ENCODE measurements at regions of chr18 and their contacts with region 1.

Region 1: DNA sequence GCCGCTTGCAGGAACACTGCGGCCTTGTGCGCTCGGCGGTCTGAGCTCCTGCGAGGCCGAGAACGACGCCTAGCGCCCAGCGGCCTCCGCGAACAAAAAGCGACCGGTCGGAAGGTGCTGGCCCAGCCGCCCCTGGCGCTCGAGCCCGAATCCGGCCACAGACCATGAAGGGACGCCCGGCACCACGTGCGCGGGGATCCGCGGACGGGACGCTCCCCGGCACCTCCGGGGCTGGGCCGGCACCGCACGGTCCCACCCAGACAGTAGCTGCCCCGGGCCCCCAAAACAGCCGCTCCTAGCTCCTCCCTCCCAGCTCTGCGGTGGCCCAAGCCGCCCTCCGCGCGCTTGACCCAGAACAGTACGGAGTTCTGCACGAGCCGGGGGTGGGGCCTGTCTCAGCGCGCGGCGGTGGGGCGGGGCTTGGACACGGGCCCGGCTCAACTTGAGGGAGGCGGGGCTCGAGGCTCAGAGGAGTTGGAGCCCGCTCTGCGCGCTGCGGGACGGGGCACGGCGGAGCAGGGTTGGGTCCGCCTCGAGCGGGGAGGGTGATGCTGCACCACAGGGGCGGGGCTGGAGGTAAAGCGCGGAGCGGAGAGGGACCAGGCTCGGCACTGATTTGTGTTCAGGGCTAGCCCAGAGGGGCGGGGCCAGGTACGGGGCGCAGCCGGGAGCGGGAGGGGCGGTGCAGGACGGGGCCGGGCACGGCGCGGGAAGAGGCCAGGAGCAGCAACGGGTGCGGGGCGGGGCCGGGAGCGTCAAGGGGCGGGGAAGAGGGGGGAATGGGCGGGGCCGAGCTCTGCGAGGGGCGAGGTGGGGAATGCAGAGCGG is 538 bp upstream of the IMPA2 start:
- DNase-seq: peak; percentile 96
- ATAC-seq: peak; percentile 91
- H3K4me3 Mint-ChIP-seq: peak overlapping the region; percentile 85
- H3K27ac Mint-ChIP-seq: peak overlapping the region; percentile 46
- H3K4me1 Mint-ChIP-seq: peaks cover 18% of the 10 kb centered on the region
- H3K27me3 Mint-ChIP-seq: no peaks in the 10 kb centered on the region
- CTCF ChIP-seq: no peak

Region 2: GRCh38 chr18:11883153-11883552 is 97.6 kb before region 1 on chr18:
- CTCF ChIA-PET with region 1: no interaction called
- POLR2A ChIA-PET with region 1: interaction called, 5 read pairs
- intact Hi-C with region 1: loop called (anchors 1 kb)
- DNase-seq: no peak
- ATAC-seq: peak; percentile 95
- H3K4me3 Mint-ChIP-seq: peak overlapping the region; percentile 6
- H3K27ac Mint-ChIP-seq: peak overlapping the region; percentile 74
- H3K4me1 Mint-ChIP-seq: peaks cover 48% of the 10 kb centered on the region
- H3K27me3 Mint-ChIP-seq: no peaks in the 10 kb centered on the region
- CTCF ChIP-seq: no peak

Region 3: DNA sequence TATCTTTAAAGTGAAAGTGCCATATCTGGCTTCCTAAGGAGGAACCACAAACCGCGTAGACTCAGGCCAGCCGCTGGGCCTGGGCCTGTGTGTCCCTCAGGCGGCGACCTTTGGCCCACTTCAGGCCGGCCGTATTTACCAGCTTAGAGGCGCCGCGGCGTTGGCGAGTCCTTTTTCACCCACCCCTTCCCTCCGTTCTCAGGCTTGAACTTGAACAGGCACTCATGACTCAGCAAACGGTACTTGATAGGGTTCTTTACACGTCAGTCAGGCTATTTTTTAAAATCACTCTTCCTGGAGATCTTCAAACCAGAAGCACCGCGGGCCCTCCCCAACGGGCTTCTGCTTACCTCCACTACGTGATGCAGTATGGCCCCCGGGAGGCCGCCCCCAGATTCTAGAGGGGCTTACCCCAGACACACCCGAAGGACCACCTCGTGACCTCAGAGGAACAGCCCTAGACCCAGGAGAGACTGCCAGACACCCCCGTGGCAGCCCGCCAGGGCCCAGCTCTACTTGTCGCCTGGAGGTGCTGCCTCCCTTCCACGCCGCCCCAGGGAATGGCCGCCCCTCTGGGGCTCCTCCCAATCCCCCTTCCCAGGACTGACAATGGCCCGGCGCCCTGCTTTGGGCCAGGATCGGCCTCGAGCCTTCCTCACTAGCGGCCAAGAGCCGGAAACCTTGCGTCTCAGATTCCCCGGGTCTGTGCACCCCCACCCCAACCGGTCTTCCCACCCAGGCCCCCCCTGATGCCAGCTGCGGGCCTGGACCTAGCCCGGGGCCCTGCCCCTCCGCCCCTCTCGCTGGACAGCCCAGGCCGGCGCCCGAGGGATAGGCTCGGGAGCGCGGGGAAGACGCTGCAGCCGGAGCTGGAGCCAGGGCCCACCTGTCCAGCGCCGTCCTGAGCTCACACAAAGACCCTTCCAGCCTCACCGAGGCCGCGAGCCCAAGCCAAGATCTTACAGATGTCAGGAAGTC is 33.3 kb before region 1 on chr18:
- CTCF ChIA-PET with region 1: no interaction called
- POLR2A ChIA-PET with region 1: interaction called, 18 read pairs
- intact Hi-C with region 1: loop called (anchors 1 kb)
- DNase-seq: peak; percentile 49
- ATAC-seq: peak; percentile 81
- H3K4me3 Mint-ChIP-seq: peak overlapping the region; percentile 84
- H3K27ac Mint-ChIP-seq: peak overlapping the region; percentile 70
- H3K4me1 Mint-ChIP-seq: peaks cover 13% of the 10 kb centered on the region
- H3K27me3 Mint-ChIP-seq: no peaks in the 10 kb centered on the region
- CTCF ChIP-seq: no peak

Region 4: DNA sequence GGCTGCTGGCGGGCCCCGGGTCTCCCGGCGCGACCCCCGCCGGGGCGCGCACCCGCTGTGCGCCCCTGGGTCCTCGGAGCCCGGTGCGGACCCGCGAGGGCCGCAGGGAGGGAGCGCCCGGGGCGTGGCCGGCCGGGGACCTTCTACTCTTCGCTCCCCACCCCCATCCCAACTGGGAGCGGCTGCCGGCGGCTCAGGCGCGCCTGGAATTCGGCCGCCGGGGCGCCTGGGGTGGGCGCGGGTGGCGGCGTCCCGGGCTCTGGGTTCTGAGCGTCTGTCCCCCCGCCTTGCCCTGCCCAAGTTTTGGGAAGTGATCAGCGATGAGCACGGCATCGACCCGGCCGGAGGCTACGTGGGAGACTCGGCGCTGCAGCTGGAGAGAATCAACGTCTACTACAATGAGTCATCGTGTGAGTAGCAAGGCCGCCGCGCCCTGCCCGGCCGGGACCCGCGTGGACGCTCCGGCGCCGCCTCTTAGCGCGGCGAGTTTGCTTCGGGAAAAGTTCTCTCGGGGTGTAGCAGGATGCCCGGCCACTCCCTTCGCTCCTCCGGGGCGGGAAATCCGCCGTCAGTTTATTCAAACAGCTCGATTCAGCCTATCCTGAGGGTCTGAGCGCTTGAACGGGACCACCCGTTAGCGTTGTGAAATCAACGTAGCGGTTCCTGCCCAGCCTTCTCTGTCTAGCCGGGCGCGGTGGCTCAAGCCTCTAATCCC is 327.8 kb after region 1 on chr18:
- CTCF ChIA-PET with region 1: no interaction called
- POLR2A ChIA-PET with region 1: no interaction called
- intact Hi-C with region 1: loop called (anchors 5 kb)
- DNase-seq: peak; percentile 57
- ATAC-seq: peak; percentile 63
- H3K4me3 Mint-ChIP-seq: peak overlapping the region; percentile 85
- H3K27ac Mint-ChIP-seq: peak overlapping the region; percentile 69
- H3K4me1 Mint-ChIP-seq: peaks cover 32% of the 10 kb centered on the region
- H3K27me3 Mint-ChIP-seq: peaks cover 20% of the 10 kb centered on the region
- CTCF ChIP-seq: no peak

Region 5: DNA sequence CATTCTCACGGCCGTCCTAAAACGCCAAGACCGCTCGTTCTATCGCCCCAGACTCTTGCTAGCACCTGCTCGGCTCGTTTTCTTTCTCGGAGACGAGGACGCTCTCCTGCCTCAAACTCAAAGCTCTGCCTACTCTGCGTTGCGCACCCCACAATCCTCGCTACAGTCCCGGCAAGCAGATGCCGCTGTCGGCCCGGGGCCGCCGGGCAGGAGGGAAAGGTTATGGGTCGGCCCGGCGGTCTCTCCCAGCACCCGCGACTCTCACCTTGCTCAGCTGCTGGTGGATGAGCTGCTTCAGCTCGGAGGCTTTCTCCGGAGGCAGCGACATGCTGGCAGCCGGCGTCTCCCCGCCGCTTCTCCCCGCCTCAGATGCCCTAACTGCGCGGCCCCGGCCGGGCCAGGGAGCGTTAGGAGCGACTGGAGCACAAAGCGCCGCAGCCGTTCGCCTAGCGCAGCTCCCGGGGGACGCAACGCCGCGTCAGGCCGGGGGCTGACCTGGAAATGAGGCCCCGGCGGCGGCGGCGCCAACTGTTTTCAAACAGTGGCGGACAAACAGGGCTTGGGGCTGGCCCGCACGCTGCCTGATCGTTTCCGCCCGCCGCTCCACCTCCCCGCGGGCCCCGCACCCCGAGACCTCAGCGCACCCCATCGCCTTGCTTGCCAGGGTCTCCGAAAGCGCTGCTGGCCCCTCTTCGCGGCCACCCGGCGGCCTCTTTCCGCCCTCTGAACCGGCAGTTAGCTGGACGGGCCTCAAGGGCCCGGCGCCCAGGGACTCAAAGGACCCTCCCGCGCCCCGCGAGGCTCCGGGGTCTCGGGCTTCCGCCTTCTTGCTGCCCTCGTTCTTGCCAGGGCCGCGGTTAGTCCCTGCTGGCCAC is 721.7 kb after region 1 on chr18 and contains the starts of genes CEP76 and PSMG2:
- CTCF ChIA-PET with region 1: no interaction called
- POLR2A ChIA-PET with region 1: interaction called, 6 read pairs
- intact Hi-C with region 1: loop called (anchors 5 kb)
- DNase-seq: peak; percentile 90
- ATAC-seq: peak; percentile 88
- H3K4me3 Mint-ChIP-seq: peak within 1 kb of the TSS; percentile 99
- H3K27ac Mint-ChIP-seq: peak within 1 kb of the TSS; percentile 99
- H3K4me1 Mint-ChIP-seq: peaks cover 38% of the 10 kb centered on the region
- H3K27me3 Mint-ChIP-seq: no peaks in the 10 kb centered on the region
- CTCF ChIP-seq: no peak
- total RNA-seq, gene CEP76: 6.4 and 6.9 TPM in 2 replicates
- total RNA-seq, gene PSMG2: 67.4 and 69.1 TPM in 2 replicates